Posterior cingulate gyrus (tissue), 11 donors: ENCODE measurements at regions of chr9 and their contacts with region 1.

Region 1: GRCh38 chr9:74773886-74774479 is 113.7 kb downstream of the TRPM6 start:
- DNase-seq: peak; percentile 69 to 97 (median 86)

Region 2: GRCh38 chr9:73995836-73996235 is 778.1 kb before region 1 on chr9:
- intact Hi-C with region 1: no loop called
- DNase-seq: no peak

Region 3: DNA sequence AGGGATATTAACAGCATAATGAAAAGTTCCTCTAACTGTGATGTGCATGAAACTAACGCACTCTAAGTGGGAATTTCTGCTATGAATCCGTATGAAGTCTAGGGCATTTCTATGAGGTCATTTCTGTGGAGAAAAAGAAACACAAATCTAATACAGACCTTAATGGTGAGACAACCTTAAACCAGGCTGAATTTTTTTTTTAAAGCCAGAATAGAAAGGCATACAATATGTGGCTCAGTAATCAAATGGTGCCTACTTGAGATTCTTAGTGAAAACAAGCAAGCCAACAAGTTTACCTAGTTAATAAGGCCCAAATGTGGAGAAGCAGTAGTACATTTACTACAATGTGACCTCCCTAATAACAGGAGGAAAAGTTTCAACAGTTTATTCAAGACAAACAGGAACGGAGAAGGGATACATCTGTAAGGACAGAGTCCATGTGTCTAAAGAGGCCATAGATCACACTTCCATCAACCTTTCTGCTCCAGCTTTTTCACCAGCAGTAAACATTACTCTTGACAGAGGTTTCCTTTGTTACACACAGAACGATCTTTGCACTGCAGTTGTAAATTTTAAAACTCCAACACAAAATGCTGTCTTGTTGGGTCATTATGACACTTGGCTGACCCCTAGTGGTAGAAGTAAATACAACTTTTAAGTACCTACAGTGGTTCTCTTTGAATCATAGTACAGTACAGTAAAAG is 227.9 kb after region 1 on chr9:
- intact Hi-C with region 1: loop called (anchors 2 kb)
- DNase-seq: no peak